ENCODE measurements at regions of chr19 and their contacts with region 1.

Region 1: GRCh38 chr19:19203012-19203856 is at the start of gene NR2C2AP:
- DNase-seq: peak; percentile 93
- ATAC-seq: peak; percentile 91
- H3K4me3 Mint-ChIP-seq: peak within 1 kb of the TSS; percentile 90
- H3K27ac Mint-ChIP-seq: peak within 1 kb of the TSS; percentile 84
- H3K4me1 Mint-ChIP-seq: peaks cover 21% of the 10 kb centered on the region
- H3K27me3 Mint-ChIP-seq: peaks cover 2% of the 10 kb centered on the region
- total RNA-seq, gene NR2C2AP: 29.1 to 32.9 TPM

Region 2: DNA sequence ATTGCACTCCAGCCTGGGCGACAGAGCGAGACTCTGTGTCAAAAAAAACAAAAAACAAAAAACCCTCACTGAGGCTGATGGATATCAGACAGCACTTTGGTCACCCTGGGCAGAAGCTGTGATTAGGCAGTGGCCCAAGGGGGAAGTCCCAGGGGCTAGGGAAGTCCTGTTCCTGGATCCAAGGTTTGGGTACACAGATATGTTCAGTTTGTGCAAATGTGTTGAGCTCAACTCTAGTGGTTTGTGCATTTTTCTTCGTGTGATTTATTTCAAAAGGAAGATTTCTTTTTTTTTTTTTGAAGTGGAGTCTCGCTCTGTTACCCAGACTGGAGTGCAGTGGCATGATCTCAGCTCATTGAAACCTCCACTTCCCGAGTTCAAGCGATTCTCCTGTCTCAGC is 45.4 kb before region 1 on chr19:
- POLR2A ChIA-PET with region 1: no interaction called
- DNase-seq: no peak
- ATAC-seq: no peak
- H3K4me3 Mint-ChIP-seq: no peak overlapping the region
- H3K27ac Mint-ChIP-seq: no peak overlapping the region
- H3K4me1 Mint-ChIP-seq: no peaks in the 10 kb centered on the region
- H3K27me3 Mint-ChIP-seq: no peaks in the 10 kb centered on the region

Region 3: GRCh38 chr19:19181488-19181998 is 21.7 kb before region 1 on chr19:
- POLR2A ChIA-PET with region 1: no interaction called
- DNase-seq: no peak
- ATAC-seq: no peak
- H3K4me3 Mint-ChIP-seq: no peak overlapping the region
- H3K27ac Mint-ChIP-seq: peak overlapping the region; percentile 57
- H3K4me1 Mint-ChIP-seq: peaks cover 6% of the 10 kb centered on the region
- H3K27me3 Mint-ChIP-seq: no peaks in the 10 kb centered on the region

Region 4: DNA sequence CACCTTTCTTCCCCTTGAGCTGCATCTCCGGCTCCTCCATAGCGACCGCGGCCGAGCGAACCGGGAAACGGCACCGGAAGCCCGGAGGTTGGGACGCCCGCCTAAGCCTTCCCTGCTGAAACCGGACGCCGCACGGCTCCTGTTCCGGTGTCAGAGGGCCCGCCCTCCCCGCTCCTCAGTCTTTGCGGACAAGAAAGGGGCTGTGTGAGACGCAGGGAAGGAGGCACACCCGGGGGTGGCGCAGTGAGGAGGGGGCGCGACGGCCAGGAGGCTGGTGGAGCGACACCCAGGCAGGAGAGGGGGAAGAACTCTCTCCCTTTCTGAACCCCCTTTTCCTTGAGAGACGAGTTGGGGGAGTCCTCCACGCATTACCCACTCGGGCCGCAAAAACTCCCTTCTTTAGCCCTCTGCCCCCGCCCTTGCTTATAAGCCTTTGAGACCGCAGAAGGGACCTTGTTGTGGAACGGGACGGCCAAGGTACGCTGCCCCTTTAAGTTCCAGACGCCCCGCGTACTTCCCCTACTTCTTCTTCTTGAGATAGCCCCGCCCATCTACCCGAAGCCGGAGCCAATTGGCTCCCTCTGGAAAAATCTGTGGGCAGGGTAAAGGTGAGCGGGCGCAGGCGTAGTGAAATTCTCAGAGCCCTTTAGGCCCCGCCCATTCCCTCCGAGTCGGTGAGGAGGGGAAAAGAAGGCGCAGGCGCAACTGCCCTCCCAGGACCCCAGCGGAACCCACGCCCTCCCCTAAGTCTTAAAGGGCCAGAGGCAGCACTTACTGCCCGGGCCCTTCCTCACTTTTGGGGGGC is 11.0 kb before region 1 on chr19 and contains the starts of genes BORCS8 and RFXANK:
- POLR2A ChIA-PET with region 1: interaction called, 58 read pairs
- DNase-seq: peak; percentile 94
- ATAC-seq: peak; percentile 90
- H3K4me3 Mint-ChIP-seq: peak within 1 kb of the TSS; percentile 96
- H3K27ac Mint-ChIP-seq: peak within 1 kb of the TSS; percentile 99
- H3K4me1 Mint-ChIP-seq: peaks cover 23% of the 10 kb centered on the region
- H3K27me3 Mint-ChIP-seq: no peaks in the 10 kb centered on the region
- total RNA-seq, gene BORCS8: 31.9 to 32.4 TPM
- total RNA-seq, gene RFXANK: 87.0 to 94.4 TPM

Region 5: GRCh38 chr19:19259741-19260140 is 56.5 kb after region 1 on chr19:
- POLR2A ChIA-PET with region 1: no interaction called
- DNase-seq: no peak
- ATAC-seq: no peak
- H3K4me3 Mint-ChIP-seq: no peak overlapping the region
- H3K27ac Mint-ChIP-seq: no peak overlapping the region
- H3K4me1 Mint-ChIP-seq: peaks cover 6% of the 10 kb centered on the region
- H3K27me3 Mint-ChIP-seq: peaks cover 49% of the 10 kb centered on the region

Region 6: GRCh38 chr19:19269952-19270694 is 66.9 kb after region 1 on chr19:
- POLR2A ChIA-PET with region 1: no interaction called
- DNase-seq: no peak
- ATAC-seq: no peak
- H3K4me3 Mint-ChIP-seq: no peak overlapping the region
- H3K27ac Mint-ChIP-seq: no peak overlapping the region
- H3K4me1 Mint-ChIP-seq: peaks cover 2% of the 10 kb centered on the region
- H3K27me3 Mint-ChIP-seq: peaks cover 31% of the 10 kb centered on the region

Measured in activated naive CD8-positive, alpha-beta T cell treated with anti-CD3 and anti-CD28 coated beads, Interleukin-2, amount 10 ng/mL, durations not matched to agents 7 days and 5 days (primary cell).